B cell (primary cell): ENCODE measurements at regions of chr9 and their contacts with region 1.

Region 1: DNA sequence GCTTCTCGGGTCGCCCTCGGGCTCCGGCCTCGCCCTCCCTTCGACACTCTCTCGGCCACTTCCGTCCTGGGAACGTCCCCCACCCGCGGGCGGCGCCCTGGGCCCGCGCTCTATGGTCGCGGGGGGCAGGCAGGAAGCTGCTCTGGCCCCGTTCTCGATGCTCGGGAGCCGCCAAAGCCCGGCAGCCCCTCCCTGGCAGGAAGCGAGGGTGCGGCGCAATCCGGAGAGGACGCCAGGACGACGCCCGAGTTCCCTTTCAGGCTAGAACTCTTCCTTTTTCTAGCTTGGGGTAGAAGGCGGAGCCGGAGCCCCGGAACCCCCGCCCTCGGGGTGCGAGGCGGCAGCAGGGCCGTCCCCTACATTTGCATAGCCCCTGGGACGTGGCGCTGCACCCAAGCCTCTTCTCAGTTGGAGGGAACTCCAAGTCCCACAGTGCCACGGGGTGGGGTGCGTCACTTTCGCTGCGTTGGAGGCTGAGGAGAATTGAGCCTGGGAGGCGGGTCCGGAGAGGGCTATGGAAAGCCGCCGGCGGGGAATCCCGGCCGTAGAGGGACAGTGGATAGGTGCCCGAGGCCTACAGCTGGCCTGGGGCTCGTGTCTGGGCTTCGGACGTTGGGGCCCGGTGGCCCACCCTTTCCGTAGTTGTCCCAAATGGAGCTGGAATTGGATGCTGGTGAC is at the starts of genes CREB3 and TLN1:
- DNase-seq: peak; percentile 98
- ATAC-seq: peak; percentile 87
- H3K4me3 ChIP-seq: peak within 1 kb of the TSS; percentile 52 to 87 (median 82)
- H3K4me3 Mint-ChIP-seq: no peak within 1 kb of the TSS
- H3K27ac ChIP-seq: peak within 1 kb of the TSS; percentile 69 to 92
- H3K27ac Mint-ChIP-seq: peak within 1 kb of the TSS; percentile 96
- H3K4me1 ChIP-seq: peaks cover 53 to 61% of the 10 kb centered on the region in 2 donors
- H3K4me1 Mint-ChIP-seq: peaks cover 12% of the 10 kb centered on the region
- H3K27me3 ChIP-seq: no peaks in the 10 kb centered on the region
- H3K27me3 Mint-ChIP-seq: no peaks in the 10 kb centered on the region
- CTCF ChIP-seq: no peak
- total RNA-seq, gene CREB3: 18.1 and 20.7 TPM in 2 replicates
- total RNA-seq, gene TLN1: 272 and 280 TPM in 2 replicates

Region 2: DNA sequence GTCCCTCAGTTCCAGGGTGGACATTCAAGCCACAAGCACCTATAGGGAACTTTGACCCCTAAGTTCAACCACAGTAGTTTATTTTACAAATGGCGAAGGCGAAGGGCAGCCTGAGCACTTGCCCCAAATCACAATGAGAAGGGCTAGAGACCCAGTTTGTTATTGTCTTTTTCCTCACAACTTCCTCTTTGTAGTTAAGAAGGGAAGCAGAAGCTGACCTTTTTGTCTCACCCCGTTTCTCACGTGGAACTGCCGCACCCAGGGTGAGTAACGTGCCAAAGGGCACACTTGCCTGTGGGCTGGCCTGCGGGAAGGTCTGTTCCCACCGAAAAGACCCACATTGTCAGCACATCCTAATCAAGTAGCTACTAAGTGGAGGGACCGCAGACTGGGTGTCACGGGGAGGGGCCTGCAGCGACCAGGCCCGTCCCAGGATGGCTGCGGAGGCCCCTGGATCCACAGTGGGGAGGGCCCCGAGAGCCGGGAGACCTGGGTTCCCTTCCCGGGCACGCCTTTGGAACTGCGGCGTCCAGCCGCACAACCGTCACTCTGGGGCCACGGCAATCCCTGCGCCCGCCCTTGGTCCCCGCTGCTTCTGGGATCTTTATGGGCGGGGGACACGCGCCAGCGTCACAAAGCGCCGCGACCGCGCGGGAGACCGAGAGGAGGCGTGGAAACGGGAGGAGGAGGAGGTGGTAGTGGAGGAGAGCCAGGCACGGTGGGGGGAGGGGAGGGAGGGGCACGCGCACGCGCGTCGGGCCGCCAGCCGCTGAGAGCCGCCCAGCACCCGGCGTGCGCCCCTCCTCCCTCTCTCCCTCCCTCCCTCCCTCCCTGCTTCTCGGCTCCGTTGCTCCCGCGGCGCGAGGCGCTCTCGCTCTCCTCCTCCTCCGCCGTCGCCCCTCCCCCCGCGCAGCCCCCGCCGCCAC is 1915.7 kb before region 1 on chr9 and contains the start of gene UBE2R2:
- CTCF ChIA-PET with region 1: no interaction called
- POLR2A ChIA-PET with region 1: no interaction called
- intact Hi-C with region 1: loop called (anchors 5 kb)
- DNase-seq: peak; percentile 97
- ATAC-seq: peak; percentile 73
- H3K4me3 ChIP-seq: peak within 1 kb of the TSS; percentile 68 to 85 (median 78)
- H3K4me3 Mint-ChIP-seq: peak within 1 kb of the TSS; percentile 98
- H3K27ac ChIP-seq: peak within 1 kb of the TSS; percentile 99
- H3K27ac Mint-ChIP-seq: peak within 1 kb of the TSS; percentile 100
- H3K4me1 ChIP-seq: peaks cover 46 to 52% of the 10 kb centered on the region in 2 donors
- H3K4me1 Mint-ChIP-seq: peaks cover 64% of the 10 kb centered on the region
- H3K27me3 ChIP-seq: no peaks in the 10 kb centered on the region
- H3K27me3 Mint-ChIP-seq: no peaks in the 10 kb centered on the region
- CTCF ChIP-seq: no peak
- total RNA-seq, gene UBE2R2: 46.0 and 48.8 TPM in 2 replicates

Region 3: GRCh38 chr9:35603987-35604577 is 128.2 kb before region 1 on chr9:
- CTCF ChIA-PET with region 1: interaction called, 14 read pairs
- POLR2A ChIA-PET with region 1: interaction called, 11 read pairs
- intact Hi-C with region 1: loop called (anchors 1 kb)
- DNase-seq: peak; percentile 100
- ATAC-seq: peak; percentile 86
- H3K4me3 ChIP-seq: peak overlapping the region; percentile 71 to 84 (median 81)
- H3K4me3 Mint-ChIP-seq: peak overlapping the region; percentile 97
- H3K27ac ChIP-seq: peak overlapping the region; percentile 80 to 84
- H3K27ac Mint-ChIP-seq: peak overlapping the region; percentile 99
- H3K4me1 ChIP-seq: peaks cover 26 to 46% of the 10 kb centered on the region in 2 donors
- H3K4me1 Mint-ChIP-seq: peaks cover 36% of the 10 kb centered on the region
- H3K27me3 ChIP-seq: no peaks in the 10 kb centered on the region
- H3K27me3 Mint-ChIP-seq: no peaks in the 10 kb centered on the region
- CTCF ChIP-seq: peak; percentile 97

Region 4: GRCh38 chr9:35657546-35658136 is 74.6 kb before region 1 on chr9 and contains the start of gene RMRP:
- CTCF ChIA-PET with region 1: interaction called, 63 read pairs
- POLR2A ChIA-PET with region 1: interaction called, 25 read pairs
- intact Hi-C with region 1: loop called (anchors 1 kb)
- DNase-seq: peak; percentile 97
- ATAC-seq: peak; percentile 79
- H3K4me3 ChIP-seq: peak within 1 kb of the TSS; percentile 84 to 93 (median 87)
- H3K4me3 Mint-ChIP-seq: peak within 1 kb of the TSS; percentile 94
- H3K27ac ChIP-seq: peak within 1 kb of the TSS; percentile 99 to 100
- H3K27ac Mint-ChIP-seq: peak within 1 kb of the TSS; percentile 97
- H3K4me1 ChIP-seq: peaks cover 39 to 62% of the 10 kb centered on the region in 2 donors
- H3K4me1 Mint-ChIP-seq: peaks cover 66% of the 10 kb centered on the region
- H3K27me3 ChIP-seq: no peaks in the 10 kb centered on the region
- H3K27me3 Mint-ChIP-seq: no peaks in the 10 kb centered on the region
- CTCF ChIP-seq: no peak
- total RNA-seq, gene RMRP: 7,890 and 7,920 TPM in 2 replicates

Region 5: DNA sequence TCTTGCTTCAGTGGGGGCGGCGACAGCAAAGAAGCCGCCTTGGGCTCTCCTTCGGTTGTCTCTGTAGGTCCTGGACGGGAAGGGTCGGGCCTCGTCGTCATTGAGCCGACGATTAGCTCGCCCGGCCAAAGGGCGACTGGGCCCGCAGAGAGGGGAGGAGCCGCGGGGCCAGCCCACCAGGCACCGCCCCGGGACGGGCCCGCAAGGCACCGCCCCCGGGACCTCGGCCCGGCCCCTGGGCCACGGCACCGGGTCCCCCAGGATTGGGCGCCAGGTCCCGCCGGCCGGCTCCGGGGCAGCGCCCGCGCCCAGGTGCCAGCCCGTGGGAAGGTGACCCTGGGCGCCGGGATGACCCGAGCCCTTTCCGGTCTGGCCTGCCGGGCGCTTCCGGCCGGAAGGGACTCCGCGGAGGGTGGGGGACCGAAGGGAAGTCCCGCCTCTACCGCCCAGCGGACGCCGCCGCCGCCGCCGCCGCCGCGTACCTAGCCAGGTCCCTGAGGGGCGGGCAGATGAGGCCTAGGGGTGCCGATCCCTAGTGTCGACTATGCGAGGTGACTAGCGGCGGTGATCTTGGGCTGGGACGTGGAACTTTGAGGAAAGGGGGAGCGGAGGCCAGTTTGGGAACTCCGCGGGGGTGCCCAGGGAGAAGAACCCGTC is 16.7 kb after region 1 on chr9 and contains the starts of genes GBA2 and RGP1:
- CTCF ChIA-PET with region 1: interaction called, 142 read pairs
- POLR2A ChIA-PET with region 1: interaction called, 29 read pairs
- intact Hi-C with region 1: loop called (anchors 1 kb)
- DNase-seq: peak; percentile 82
- ATAC-seq: peak; percentile 83
- H3K4me3 ChIP-seq: peak within 1 kb of the TSS; percentile 73 to 92 (median 84)
- H3K4me3 Mint-ChIP-seq: peak within 1 kb of the TSS; percentile 96
- H3K27ac ChIP-seq: peak within 1 kb of the TSS; percentile 71 to 77
- H3K27ac Mint-ChIP-seq: peak within 1 kb of the TSS; percentile 96
- H3K4me1 ChIP-seq: peaks cover 37 to 41% of the 10 kb centered on the region in 2 donors
- H3K4me1 Mint-ChIP-seq: peaks cover 50% of the 10 kb centered on the region
- H3K27me3 ChIP-seq: no peaks in the 10 kb centered on the region
- H3K27me3 Mint-ChIP-seq: no peaks in the 10 kb centered on the region
- CTCF ChIP-seq: no peak
- total RNA-seq, gene GBA2: 137 and 158 TPM in 2 replicates
- total RNA-seq, gene RGP1: 42.3 and 44.3 TPM in 2 replicates

Region 6: GRCh38 chr9:35769763-35770162 is 37.5 kb after region 1 on chr9:
- CTCF ChIA-PET with region 1: no interaction called
- POLR2A ChIA-PET with region 1: no interaction called
- intact Hi-C with region 1: no loop called
- DNase-seq: no peak
- ATAC-seq: no peak
- H3K4me3 ChIP-seq: no peak overlapping the region
- H3K4me3 Mint-ChIP-seq: no peak overlapping the region
- H3K27ac ChIP-seq: no peak overlapping the region
- H3K27ac Mint-ChIP-seq: no peak overlapping the region
- H3K4me1 ChIP-seq: peaks cover 0 to under 1% of the 10 kb centered on the region in 2 donors
- H3K4me1 Mint-ChIP-seq: peaks cover 5% of the 10 kb centered on the region
- H3K27me3 ChIP-seq: no peaks in the 10 kb centered on the region
- H3K27me3 Mint-ChIP-seq: no peaks in the 10 kb centered on the region
- CTCF ChIP-seq: no peak

Region 7: GRCh38 chr9:35829084-35829763 is 97.0 kb after region 1 on chr9 and contains the start of gene TMEM8B:
- CTCF ChIA-PET with region 1: interaction called, 16 read pairs
- POLR2A ChIA-PET with region 1: interaction called, 4 read pairs
- intact Hi-C with region 1: loop called (anchors 1 kb)
- DNase-seq: peak; percentile 94
- ATAC-seq: peak; percentile 92
- H3K4me3 ChIP-seq: peak within 1 kb of the TSS; percentile 32 to 80 (median 78)
- H3K4me3 Mint-ChIP-seq: peak within 1 kb of the TSS; percentile 96
- H3K27ac ChIP-seq: peak within 1 kb of the TSS; percentile 60 to 78
- H3K27ac Mint-ChIP-seq: peak within 1 kb of the TSS; percentile 89
- H3K4me1 ChIP-seq: peaks cover 24 to 35% of the 10 kb centered on the region in 2 donors
- H3K4me1 Mint-ChIP-seq: peaks cover 44% of the 10 kb centered on the region
- H3K27me3 ChIP-seq: no peaks in the 10 kb centered on the region
- H3K27me3 Mint-ChIP-seq: no peaks in the 10 kb centered on the region
- CTCF ChIP-seq: no peak
- total RNA-seq, gene TMEM8B: 13.6 and 14.5 TPM in 2 replicates

Region 8: DNA sequence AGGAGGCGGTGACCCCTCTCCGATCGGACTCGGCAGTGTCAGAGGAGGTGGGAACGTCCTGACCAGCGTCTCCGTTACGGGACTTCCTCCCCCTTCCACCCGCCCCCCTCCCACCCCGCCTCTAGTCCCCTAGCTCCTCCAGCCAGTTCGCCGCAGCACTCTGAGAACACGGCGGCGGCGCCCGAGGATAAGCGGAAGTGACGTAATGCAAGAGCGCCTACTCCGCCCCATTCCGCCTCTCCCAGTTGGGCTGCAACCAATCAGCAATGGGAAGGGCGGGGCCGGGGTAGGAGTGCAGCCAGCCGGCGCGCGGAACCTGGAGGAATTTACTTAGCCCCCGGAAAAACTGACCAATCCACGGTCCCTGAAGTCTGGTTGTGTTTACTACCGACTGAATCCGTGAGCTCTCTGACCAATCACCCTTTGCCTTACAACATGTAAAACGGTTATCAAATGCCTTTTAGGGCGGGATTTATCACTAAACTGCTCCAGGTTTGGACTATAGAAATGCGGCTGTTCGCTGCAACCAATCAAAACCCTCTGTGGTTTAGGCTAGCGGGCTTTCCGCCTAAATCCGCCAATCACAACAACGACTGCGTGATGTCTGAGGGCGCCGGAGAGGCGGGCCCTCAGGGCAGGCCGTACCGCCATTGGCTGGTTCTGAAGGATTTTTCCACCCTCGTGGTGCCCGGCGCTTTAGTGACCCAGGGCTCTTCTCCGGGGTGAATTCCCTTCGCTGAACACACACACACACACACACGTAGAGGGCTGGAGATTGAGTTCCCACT is 1733.2 kb after region 1 on chr9 and contains the start of gene ZBTB5:
- CTCF ChIA-PET with region 1: no interaction called
- POLR2A ChIA-PET with region 1: no interaction called
- intact Hi-C with region 1: loop called (anchors 10 kb)
- DNase-seq: peak; percentile 100
- ATAC-seq: peak; percentile 77
- H3K4me3 ChIP-seq: peak within 1 kb of the TSS; percentile 90 to 99 (median 95)
- H3K4me3 Mint-ChIP-seq: peak within 1 kb of the TSS; percentile 95
- H3K27ac ChIP-seq: peak within 1 kb of the TSS; percentile 93 to 98
- H3K27ac Mint-ChIP-seq: peak within 1 kb of the TSS; percentile 98
- H3K4me1 ChIP-seq: peaks cover 23 to 27% of the 10 kb centered on the region in 2 donors
- H3K4me1 Mint-ChIP-seq: peaks cover 30% of the 10 kb centered on the region
- H3K27me3 ChIP-seq: no peaks in the 10 kb centered on the region
- H3K27me3 Mint-ChIP-seq: no peaks in the 10 kb centered on the region
- CTCF ChIP-seq: no peak
- total RNA-seq, gene ZBTB5: 25.1 and 27.6 TPM in 2 replicates